HAP-1 (cell line): ENCODE measurements at regions of chr3 and their contacts with region 1.

Region 1: GRCh38 chr3:51371943-51372557 is 13.0 kb upstream of the MANF start:
- DNase-seq: peak; percentile 67 to 80
- H3K4me3 ChIP-seq: no peak overlapping the region
- H3K4me1 ChIP-seq: no peaks in the 10 kb centered on the region
- H3K27me3 ChIP-seq: no peaks in the 10 kb centered on the region

Region 2: DNA sequence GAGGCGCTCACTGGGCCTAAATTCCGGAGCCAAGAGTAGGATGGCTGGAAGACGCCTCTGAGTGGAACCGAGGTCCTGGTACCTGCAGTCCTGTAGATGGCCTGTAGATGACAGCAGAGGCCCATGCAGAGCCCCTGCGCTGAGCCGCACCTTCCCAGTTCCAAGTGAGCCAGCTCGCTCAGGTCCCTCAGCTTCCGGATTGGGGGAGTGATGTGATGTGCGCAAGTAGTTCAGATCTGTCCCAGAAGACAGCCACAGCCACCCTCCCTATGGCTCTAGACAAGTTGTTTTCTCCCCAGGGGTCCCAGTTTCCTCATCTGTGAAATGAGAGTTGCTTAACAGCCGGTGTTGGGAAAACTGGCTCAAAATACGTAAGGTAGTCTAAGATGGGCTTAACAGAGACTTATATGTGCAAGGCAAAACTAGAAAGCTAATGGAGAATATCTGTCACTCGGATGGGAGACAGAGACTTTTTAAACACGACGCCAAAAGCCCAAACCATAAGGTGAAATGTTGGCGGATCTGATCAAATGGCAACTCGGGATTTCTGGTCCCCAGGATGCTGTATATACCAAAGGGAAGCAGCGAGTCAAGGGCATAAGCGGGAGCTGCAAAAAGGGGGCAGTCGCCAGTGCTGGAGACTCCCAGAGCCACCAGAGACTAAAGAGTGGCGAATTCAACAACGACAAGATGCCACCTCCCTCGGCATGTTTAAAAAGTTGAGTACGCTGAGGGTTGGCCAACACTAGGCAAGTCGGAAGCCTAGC is 755.9 kb before region 1 on chr3:
- in situ Hi-C with region 1: loop called (anchors 5 kb)
- DNase-seq: peak; percentile 89 to 92
- H3K4me3 ChIP-seq: peak overlapping the region; percentile 90
- H3K4me1 ChIP-seq: peaks cover 18% of the 10 kb centered on the region
- H3K27me3 ChIP-seq: no peaks in the 10 kb centered on the region

Region 3: DNA sequence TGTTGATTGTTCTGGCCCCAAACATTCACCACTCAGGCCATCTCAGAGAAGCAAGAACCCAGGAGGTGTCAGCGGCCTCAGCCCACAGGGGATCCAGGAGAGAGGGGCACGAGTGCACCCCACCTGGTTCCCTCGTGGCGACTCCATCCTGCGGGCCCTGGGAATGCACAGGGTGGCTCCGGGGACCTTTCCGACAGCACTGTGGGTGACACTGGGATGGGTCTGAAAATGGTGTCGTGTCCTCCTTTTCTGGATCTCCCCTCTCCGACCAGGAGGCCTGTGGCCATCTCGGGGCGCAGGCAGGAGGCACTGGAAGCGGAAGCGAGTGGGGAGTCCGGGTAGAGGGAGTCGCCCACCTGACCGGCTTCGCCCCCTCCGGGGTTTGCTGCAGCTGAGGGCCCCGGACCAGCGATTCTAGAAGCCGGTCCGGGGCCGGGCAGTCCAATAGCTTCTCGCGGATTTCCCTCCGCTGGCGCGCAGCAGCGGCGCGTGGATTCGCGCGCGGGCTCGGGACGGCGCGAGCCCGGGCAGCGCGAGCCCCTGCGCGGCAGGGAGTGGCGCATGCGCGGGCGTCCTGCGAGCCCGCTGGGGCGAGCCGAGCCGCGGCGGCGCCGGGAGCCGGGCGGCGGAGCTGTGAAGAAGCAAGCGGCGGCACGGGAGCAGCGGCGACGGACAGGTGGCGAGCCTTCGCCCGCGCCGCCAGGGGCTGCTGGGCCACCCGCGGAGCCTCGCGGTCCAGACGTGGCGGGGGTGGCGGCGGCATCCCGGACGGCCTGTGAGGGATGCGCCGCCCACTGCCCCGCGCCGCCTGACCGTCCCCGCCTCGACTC is 697.5 kb before region 1 on chr3 and contains the start of gene DOCK3:
- in situ Hi-C with region 1: loop called (anchors 10 kb)
- DNase-seq: peak; percentile 61 to 67
- H3K4me3 ChIP-seq: peak within 1 kb of the TSS; percentile 40
- H3K4me1 ChIP-seq: peaks cover 28% of the 10 kb centered on the region
- H3K27me3 ChIP-seq: no peaks in the 10 kb centered on the region

Region 4: GRCh38 chr3:50961386-50961785 is 410.7 kb before region 1 on chr3:
- in situ Hi-C with region 1: loop called (anchors 10 kb)
- DNase-seq: no peak
- H3K4me3 ChIP-seq: no peak overlapping the region
- H3K4me1 ChIP-seq: no peaks in the 10 kb centered on the region
- H3K27me3 ChIP-seq: no peaks in the 10 kb centered on the region

Region 5: DNA sequence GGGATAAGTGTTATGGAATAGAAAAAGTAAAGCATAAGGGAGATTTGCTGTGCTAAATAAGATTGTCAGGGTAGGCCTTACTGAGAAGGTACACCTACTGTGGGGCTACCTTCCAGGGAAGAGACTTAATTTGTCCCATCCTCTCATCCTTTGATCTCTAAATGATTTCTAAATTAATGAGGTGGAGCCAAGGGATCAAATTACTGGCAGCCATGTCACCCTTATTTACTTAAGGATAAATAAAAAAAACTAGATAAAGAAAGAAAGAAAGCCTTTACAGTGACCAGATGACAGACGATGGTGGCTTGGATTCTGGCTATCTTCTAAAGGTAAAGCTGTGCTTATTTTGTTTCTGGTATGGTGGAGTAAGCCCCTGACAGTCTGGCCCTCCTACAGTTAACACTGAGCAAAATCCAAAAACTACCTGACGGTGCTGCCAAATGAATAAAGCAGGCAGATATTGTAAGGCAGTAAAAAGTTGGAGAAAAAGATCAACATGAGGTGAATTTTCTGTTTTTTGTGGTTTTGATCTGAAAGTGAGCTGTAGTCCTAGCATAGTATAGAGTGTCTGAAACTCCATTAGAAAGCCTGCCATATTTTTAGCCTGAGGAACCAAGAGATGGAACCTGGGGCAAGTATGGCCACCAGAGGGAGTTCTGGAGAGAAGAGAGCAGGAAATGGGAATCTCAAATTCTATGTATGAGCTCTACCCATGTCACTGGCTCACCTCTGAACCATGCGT is 272.1 kb before region 1 on chr3:
- in situ Hi-C with region 1: loop called (anchors 10 kb)
- DNase-seq: peak; percentile 64 to 76
- H3K4me3 ChIP-seq: no peak overlapping the region
- H3K4me1 ChIP-seq: no peaks in the 10 kb centered on the region
- H3K27me3 ChIP-seq: no peaks in the 10 kb centered on the region